Activated naive CD4-positive, alpha-beta T cell treated with anti-CD3 and anti-CD28 coated beads for 36 hours (primary cell): ENCODE measurements at regions of chrX and their contacts with region 1.

Region 1: DNA sequence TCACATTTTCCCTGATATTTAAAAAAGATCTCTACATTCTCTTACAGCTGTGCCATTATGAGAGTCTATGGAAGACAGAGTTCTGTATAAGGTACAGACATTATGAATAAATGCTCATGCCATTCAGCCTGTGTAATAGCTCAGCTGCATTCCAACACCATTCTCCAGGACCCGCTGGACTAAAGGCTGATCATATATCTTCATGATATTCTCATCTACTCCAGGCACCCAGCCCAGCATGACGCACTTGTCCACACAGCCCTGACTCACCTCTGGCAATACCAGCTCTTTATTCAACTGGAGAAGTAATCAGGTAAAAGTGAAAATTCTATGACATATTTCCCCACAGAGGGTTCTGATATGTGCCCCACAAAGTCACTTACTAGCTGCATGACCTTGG is 437.5 kb upstream of the FGF16 start:
- DNase-seq: no peak
- H3K4me3 Mint-ChIP-seq: no peak overlapping the region
- H3K27ac Mint-ChIP-seq: no peak overlapping the region
- H3K4me1 Mint-ChIP-seq: peaks cover 6% of the 10 kb centered on the region
- H3K27me3 Mint-ChIP-seq: peaks cover 4% of the 10 kb centered on the region

Region 2: GRCh38 chrX:76427560-76428242 is 582.0 kb before region 1 on chrX and contains the start of gene MAGEE1:
- CTCF ChIA-PET with region 1: no interaction called
- intact Hi-C with region 1: loop called (anchors 10 kb)
- DNase-seq: peak; percentile 82
- H3K4me3 Mint-ChIP-seq: peak within 1 kb of the TSS; percentile 81
- H3K27ac Mint-ChIP-seq: peak within 1 kb of the TSS; percentile 50
- H3K4me1 Mint-ChIP-seq: peaks cover 25% of the 10 kb centered on the region
- H3K27me3 Mint-ChIP-seq: no peaks in the 10 kb centered on the region
- total RNA-seq, gene MAGEE1: 3.0 to 3.1 TPM

Region 3: DNA sequence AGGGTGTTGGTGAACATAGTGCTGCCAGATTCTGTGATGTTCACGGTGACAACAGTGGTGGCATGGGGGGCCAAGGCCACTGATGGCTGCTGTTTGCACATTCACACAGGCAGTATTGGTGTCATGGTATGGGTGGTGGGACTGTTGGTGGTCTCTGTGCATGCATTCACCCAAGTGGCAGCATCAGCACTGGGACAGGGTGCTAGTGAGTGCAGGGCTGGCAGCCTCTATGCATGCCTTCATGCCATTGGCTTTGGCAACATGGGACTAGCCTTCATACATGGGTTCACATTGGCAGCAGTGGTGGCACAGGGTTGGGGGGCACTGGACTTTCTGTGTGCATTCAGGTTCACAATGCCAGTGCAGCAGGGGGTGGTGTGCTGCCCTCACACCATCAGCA is 52.2 kb before region 1 on chrX:
- CTCF ChIA-PET with region 1: no interaction called
- intact Hi-C with region 1: no loop called
- DNase-seq: no peak
- H3K4me3 Mint-ChIP-seq: no peak overlapping the region
- H3K27ac Mint-ChIP-seq: no peak overlapping the region
- H3K4me1 Mint-ChIP-seq: no peaks in the 10 kb centered on the region
- H3K27me3 Mint-ChIP-seq: peaks cover 3% of the 10 kb centered on the region

Region 4: DNA sequence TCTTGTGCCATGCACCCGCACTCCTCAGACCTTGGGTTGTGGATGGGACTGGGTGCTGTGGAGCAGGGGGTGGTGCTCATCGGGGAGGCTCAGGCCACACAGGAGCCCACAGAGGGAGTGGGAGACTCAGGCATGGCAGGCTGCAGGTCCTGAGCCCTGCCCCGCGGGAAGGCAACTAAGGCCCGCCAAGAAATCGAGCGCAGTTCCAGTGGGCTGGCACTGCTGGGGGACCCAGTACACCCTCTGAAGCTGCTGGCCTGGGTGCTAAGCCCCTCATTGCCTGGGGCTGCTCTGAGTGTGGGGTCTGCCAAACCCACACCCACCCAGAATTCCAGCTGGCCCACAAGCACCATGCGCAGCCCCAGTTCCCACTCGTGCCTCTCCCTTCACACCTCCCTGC is 13.1 kb before region 1 on chrX:
- CTCF ChIA-PET with region 1: no interaction called
- intact Hi-C with region 1: no loop called
- DNase-seq: no peak
- H3K4me3 Mint-ChIP-seq: no peak overlapping the region
- H3K27ac Mint-ChIP-seq: no peak overlapping the region
- H3K4me1 Mint-ChIP-seq: no peaks in the 10 kb centered on the region
- H3K27me3 Mint-ChIP-seq: no peaks in the 10 kb centered on the region